Aorta (tissue), 5 donors: ENCODE measurements at regions of chr11 and their contacts with region 1.

Region 1: DNA sequence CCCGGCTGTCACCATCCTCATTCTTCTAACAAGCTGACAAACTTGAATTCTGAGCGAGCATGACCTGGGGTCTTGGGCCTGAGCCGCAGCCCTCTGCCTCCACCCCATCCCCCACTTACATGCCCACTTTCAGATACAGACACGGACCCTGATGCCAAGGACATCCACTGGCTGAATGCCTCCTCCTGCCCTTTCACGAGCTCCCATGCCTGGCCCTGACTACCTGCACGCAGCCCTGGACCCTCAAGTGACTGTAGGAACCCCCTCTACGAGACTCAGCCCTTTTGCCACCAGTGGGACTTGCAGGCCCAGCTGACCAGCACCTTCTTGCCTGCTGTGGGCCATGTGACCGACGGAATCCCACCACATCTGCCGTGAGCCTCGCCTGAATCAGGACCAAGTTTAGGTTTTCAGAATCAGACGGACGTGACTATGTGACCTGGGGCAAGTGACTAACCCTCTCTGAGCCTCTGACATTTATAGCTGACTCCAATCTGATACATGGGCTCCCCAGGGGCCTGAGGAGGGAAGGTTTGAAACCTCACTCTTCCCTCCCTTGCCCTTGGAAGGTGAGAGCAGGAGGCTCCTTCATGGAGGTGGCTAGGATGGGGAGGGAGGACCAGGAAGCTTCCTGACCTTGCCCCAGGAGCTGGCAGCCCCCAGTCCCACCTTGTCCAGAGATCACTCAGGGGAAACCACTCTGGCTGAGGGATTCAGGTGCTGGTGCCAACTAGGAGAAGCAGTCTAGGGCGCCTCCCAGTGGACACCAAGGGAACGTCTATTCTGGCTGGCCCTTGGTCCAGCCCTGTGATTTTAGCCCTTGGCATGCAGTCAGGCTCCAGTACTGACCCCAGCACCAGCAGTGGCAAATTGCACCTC is 46.9 kb upstream of the SYT7 start:
- DNase-seq: peak; percentile 76 to 83
- ATAC-seq: peak; percentile 74
- H3K4me3 ChIP-seq: no peak overlapping the region
- H3K27ac ChIP-seq: no peak overlapping the region
- H3K4me1 ChIP-seq: no peaks in the 10 kb centered on the region
- H3K27me3 ChIP-seq: no peaks in the 10 kb centered on the region

Region 2: GRCh38 chr11:61477727-61478148 is 150.1 kb before region 1 on chr11:
- intact Hi-C with region 1: loop called (anchors 5 to 10 kb)
- DNase-seq: peak; percentile 59 to 89
- ATAC-seq: peak; percentile 55
- H3K4me3 ChIP-seq: no peak overlapping the region
- H3K27ac ChIP-seq: no peak overlapping the region
- H3K4me1 ChIP-seq: no peaks in the 10 kb centered on the region
- H3K27me3 ChIP-seq: no peaks in the 10 kb centered on the region

Region 3: DNA sequence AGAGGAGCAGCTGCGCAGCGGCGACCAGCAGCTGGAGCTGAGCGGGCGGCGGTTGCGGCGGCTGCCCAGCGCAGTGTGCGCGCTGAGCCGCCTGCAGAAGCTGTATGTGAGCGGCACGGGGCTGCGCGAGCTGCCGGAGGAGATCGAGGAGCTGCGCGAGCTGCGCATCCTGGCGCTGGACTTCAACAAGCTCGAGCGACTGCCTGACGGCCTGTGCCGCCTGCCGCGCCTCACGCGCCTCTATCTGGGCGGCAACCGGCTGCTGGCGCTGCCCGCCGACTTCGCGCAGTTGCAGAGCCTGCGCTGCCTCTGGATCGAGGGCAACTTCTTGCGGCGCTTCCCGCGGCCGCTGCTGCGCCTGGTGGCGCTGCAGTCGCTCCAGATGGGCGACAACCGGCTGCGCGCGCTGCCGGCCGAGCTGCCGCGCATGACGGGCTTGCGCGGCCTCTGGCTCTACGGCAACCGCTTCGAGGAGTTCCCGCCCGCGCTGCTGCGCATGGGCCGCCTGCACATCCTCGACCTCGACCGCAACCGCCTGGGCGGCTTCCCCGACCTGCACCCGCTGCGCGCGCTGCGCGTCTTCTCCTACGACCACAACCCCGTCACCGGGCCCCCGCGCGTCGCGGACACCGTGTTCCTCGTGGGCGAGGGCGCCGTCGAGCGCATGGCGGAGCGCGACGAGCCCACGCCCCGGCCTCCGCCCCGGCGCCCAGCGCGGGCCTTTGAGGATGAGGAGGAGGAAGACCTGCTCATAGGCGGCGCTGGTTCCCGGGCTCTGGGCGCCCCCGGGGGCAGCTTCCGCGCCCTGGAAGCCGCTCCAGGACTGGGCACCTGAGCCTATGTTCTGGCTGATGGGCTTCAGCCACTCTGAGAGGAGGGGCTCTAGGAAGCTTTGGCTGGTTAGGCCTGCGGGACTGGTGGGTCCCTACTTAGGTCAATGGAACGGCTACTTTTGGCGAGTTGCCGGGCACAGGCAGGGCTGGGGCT is 118.5 kb before region 1 on chr11:
- intact Hi-C with region 1: loop called in 1 of 2 experiments (anchors 10 kb)
- DNase-seq: peak; percentile 75 to 87
- ATAC-seq: peak; percentile 70
- H3K4me3 ChIP-seq: no peak overlapping the region
- H3K27ac ChIP-seq: no peak overlapping the region
- H3K4me1 ChIP-seq: no peaks in the 10 kb centered on the region
- H3K27me3 ChIP-seq: no peaks in the 10 kb centered on the region

Region 4: GRCh38 chr11:61581030-61581928 is 46.5 kb before region 1 on chr11 and contains the start of gene SYT7:
- intact Hi-C with region 1: loop called in 1 of 2 experiments (anchors 5 kb)
- DNase-seq: peak; percentile 97 to 99
- ATAC-seq: peak; percentile 91
- H3K4me3 ChIP-seq: peak within 1 kb of the TSS; percentile 28 to 82
- H3K27ac ChIP-seq: no peak within 1 kb of the TSS
- H3K4me1 ChIP-seq: no peaks in the 10 kb centered on the region
- H3K27me3 ChIP-seq: no peaks in the 10 kb centered on the region
- total RNA-seq, gene SYT7: 1.0 to 2.3 TPM

Region 5: DNA sequence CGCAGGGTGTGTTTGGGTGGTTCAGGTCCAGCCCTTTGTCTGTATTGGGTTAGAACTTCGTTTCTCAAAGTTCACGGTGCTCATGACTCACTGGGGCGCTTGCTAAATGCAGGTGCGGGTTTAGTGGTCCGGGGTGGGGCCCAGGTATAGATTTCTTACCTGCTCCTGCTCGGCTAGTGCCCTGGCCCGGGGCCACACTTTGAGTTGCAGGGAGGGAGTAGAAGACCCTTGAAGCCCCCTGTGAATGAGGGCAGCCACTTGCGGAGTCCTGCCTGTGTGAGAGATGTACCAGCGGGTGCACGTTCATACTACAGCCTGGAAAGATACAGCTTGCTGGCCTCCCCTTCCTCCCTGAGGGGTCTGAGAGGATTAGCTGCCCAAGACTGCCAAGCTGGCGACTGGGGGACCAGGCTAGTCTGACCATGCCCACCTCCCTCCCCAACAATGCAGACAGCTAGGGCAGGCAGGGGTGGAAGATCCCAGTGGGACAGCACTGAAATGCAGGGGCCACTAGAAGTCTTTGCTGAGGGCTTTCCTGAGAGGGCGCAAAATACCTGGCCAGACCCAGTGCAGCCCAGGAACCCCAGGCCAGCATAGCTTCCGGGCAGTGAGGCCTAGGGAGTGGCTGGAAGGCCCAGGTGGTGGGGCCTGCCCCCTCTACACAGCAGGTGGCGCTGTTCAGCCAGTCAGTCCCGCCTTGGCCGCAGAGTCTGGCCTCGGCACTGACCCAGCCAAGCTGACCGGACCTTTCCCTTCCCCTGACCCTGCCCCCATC is 119.6 kb after region 1 on chr11:
- intact Hi-C with region 1: no loop called
- DNase-seq: peak; percentile 84 to 91
- ATAC-seq: peak; percentile 82
- H3K4me3 ChIP-seq: no peak overlapping the region
- H3K27ac ChIP-seq: no peak overlapping the region
- H3K4me1 ChIP-seq: no peaks in the 10 kb centered on the region
- H3K27me3 ChIP-seq: no peaks in the 10 kb centered on the region

Region 6: GRCh38 chr11:61841636-61842527 is 214.1 kb after region 1 on chr11:
- intact Hi-C with region 1: no loop called
- DNase-seq: peak in 1 of 2 donors; percentile 60
- ATAC-seq: no peak
- H3K4me3 ChIP-seq: no peak overlapping the region
- H3K27ac ChIP-seq: no peak overlapping the region
- H3K4me1 ChIP-seq: no peaks in the 10 kb centered on the region
- H3K27me3 ChIP-seq: no peaks in the 10 kb centered on the region